Left cardiac atrium (tissue), 4 donors: ENCODE measurements at regions of chr18 and their contacts with region 1.

Region 1: DNA sequence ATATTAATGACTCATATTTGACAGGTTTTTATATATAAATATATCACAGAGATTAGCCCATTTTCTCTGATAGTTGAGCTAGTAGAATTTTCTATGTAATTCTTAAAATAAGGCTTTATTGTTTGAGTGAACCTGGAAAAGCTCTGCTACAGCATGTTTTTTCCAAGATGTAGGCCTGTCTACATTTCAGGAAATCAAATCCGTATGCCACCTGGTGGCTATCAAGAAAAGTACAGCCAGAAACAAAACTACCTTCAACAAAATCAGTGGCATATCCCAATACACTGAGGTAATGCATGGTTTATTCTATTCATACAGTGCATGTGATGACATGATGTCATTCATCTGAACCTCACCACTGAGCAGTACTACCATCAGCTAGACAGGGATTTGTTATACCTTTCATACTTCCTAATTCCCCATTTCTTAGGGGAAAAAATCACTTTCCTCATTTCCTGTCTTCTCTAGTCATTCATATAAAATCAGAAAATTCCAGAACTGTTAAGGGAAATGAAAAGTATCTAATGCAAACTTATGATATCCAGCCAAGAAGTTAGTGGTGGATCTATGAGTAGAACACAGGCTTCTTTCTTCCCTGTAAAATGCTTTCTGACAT is 310.4 kb upstream of the SYT4 start:
- DNase-seq: no peak
- ATAC-seq: peak; percentile 57 to 62

Region 2: GRCh38 chr18:43571078-43571689 is 16.5 kb before region 1 on chr18:
- intact Hi-C with region 1: loop called in 1 of 2 experiments (anchors 2 kb)
- DNase-seq: no peak
- ATAC-seq: peak in 1 of 2 donors; percentile 27